ENCODE measurements at regions of chr18 and their contacts with region 1.

Region 1: GRCh38 chr18:3703732-3704176 is 253.8 kb downstream of the TGIF1 start:
- DNase-seq: peak; percentile 45
- ATAC-seq: peak; percentile 97
- H3K4me3 ChIP-seq: no peak overlapping the region
- H3K27ac ChIP-seq: peak overlapping the region; percentile 90
- H3K4me1 ChIP-seq: peaks cover 29% of the 10 kb centered on the region
- H3K27me3 ChIP-seq: no peaks in the 10 kb centered on the region
- CTCF ChIP-seq: peak; percentile 90

Region 2: DNA sequence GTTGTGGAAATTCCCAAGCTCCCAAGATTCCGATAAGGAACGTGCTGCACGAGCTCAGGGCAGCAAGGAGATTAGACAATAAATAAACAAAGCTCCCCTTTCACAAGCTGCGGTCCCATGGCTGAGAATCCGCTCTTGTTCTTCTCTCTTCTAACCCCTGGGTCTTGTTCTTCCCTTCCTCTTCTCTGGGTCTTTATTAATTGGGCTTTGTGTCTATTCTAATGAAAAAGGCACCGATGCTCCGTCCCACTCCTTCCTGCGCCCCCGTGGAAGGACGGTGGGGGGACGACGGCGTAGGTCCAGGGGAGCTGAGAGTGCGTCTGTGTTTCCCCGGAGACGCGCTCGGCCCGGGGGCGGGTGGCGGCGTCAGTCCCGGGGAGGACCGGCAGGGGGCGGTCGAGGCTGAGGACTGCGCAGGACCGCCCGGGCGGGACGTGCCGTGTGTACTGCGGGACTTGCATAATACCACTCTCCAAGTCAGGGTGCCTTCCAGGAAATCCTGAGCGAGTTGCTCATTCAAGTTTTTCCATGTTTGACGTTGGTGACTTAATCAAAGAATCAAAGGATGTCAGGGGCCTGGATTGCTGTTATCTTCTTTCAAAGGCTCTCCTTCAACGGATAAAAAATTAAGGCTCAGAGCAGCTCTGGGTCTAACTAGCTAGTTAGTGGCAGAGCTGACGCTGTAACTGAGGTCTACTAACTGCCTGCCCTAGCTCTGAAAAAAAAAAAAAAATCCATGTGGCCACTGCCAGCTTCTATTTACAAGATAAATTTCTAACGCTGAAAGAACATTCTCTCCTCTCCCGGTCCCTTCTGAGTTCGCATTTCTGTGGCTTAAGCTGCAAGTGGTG is 67.6 kb after region 1 on chr18:
- CTCF ChIA-PET with region 1: interaction called, 7 read pairs
- POLR2A ChIA-PET with region 1: no interaction called
- in situ Hi-C with region 1: no loop called
- intact Hi-C with region 1: loop called (anchors 5 kb)
- DNase-seq: peak; percentile 38
- ATAC-seq: peak; percentile 100
- H3K4me3 ChIP-seq: peak overlapping the region; percentile 42 to 51
- H3K27ac ChIP-seq: peak overlapping the region; percentile 81
- H3K4me1 ChIP-seq: peaks cover 24% of the 10 kb centered on the region
- H3K27me3 ChIP-seq: no peaks in the 10 kb centered on the region
- CTCF ChIP-seq: peak; percentile 98

Region 3: GRCh38 chr18:3869848-3870247 is 166.1 kb after region 1 on chr18:
- CTCF ChIA-PET with region 1: interaction called, 4 read pairs
- POLR2A ChIA-PET with region 1: interaction called, 5 read pairs
- in situ Hi-C with region 1: no loop called
- intact Hi-C with region 1: loop called (anchors 2 kb)
- DNase-seq: peak; percentile 25
- ATAC-seq: peak; percentile 95
- H3K4me3 ChIP-seq: no peak overlapping the region
- H3K27ac ChIP-seq: peak overlapping the region; percentile 74; the same call in 1 of the 2 replicates
- H3K4me1 ChIP-seq: peaks cover 9% of the 10 kb centered on the region
- H3K27me3 ChIP-seq: no peaks in the 10 kb centered on the region; the same call in 1 of the 2 replicates
- CTCF ChIP-seq: peak; percentile 60; the same call in 1 of the 2 replicates

Region 4: DNA sequence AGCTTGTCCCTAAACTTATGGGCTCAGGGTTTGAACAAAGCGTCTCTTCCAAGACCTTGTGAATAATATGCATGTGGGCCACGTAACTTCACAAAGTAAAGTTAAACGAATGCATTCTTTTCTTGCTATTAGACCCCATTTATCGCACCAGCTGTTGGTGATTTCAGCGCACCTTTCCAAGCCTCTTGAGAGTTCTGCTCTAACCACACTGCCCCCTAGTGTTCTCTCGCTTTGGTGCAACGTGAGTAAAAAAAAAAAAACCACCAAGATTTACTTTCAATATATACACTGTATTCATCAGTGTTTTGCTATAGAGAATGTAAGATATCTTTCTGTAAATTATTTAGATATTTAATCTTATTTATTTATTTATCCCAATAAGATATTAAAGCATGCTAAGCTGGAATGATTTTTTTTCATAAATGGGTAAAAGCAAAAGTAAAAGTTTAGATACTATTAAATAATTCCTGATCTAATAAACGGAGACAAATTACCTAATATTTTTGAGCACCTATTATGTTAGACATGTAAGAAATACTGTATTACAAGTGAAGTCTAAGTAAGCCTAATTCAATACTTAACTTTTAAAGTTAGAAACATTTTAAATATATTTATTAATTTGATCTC is 291.8 kb after region 1 on chr18:
- CTCF ChIA-PET with region 1: interaction called, 3 read pairs
- POLR2A ChIA-PET with region 1: interaction called, 5 read pairs
- in situ Hi-C with region 1: no loop called
- intact Hi-C with region 1: loop called (anchors 5 kb)
- DNase-seq: peak; percentile 52
- ATAC-seq: no peak
- H3K4me3 ChIP-seq: no peak overlapping the region
- H3K27ac ChIP-seq: peak overlapping the region; percentile 3; the same call in 1 of the 2 replicates
- H3K4me1 ChIP-seq: peaks cover 7% of the 10 kb centered on the region; the same call in 1 of the 2 replicates
- H3K27me3 ChIP-seq: no peaks in the 10 kb centered on the region
- CTCF ChIP-seq: peak; percentile 90

Measured in Panc1 (cell line).